ENCODE measurements at regions of chr5 and their contacts with region 1.

Region 1: DNA sequence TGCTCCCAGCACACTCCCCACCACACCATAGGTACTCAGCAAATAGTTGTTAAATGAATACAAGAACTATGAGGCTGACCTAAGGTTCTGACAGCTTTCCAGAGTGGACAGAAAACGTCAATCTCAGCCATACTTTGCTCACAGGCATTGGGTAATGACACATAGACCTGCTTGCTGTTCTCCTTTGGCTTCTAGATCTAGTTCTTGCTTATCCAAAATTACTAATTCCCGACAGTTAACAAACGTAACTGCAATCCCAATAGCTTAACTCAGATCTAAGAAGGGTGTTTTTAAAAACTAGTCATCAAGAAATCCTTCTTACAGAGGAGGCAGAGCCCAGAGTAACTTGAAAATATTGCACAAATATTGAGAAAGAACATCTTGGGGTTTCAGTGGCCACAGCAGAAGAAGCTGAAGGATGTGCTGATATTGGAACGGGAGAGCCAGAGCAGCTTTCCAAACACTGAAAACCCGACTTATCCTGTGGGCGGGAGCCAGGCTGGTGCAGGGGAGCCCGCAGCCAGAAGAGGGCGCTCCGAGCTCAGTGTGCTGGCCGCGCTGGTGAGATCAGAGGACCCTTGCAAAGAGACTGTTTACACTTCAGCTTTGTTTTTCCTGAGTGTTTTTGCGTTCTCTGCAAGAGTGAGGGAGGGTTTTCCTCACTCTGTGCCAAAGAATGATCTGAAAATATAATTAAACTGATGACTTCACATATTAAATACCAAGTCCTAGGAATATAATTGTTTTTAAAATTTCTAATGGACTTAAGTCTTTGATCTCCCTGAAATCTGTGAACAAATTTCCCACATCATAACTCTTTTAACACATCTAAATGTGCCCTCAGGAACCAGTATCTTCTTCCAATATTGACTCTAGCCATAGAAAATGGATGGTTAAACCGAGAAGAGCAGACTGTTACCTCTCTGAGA is 30.3 kb downstream of the FGF1 start:
- DNase-seq: peak; percentile 52
- H3K4me3 ChIP-seq: no peak overlapping the region
- H3K27ac ChIP-seq: no peak overlapping the region
- H3K4me1 ChIP-seq: no peaks in the 10 kb centered on the region
- H3K27me3 ChIP-seq: no peaks in the 10 kb centered on the region
- CTCF ChIP-seq: peak; percentile 96 to 100

Region 2: GRCh38 chr5:142151436-142152383 is 503.9 kb before region 1 on chr5:
- CTCF ChIA-PET with region 1: no interaction called
- dilution Hi-C with region 1: no loop called
- in situ Hi-C with region 1: no loop called
- intact Hi-C with region 1: loop called (anchors 1 kb)
- DNase-seq: peak; percentile 37
- H3K4me3 ChIP-seq: no peak overlapping the region
- H3K27ac ChIP-seq: no peak overlapping the region
- H3K4me1 ChIP-seq: no peaks in the 10 kb centered on the region
- H3K27me3 ChIP-seq: no peaks in the 10 kb centered on the region
- CTCF ChIP-seq: peak; percentile 78 to 88

Region 3: GRCh38 chr5:142386137-142387032 is 269.2 kb before region 1 on chr5:
- CTCF ChIA-PET with region 1: interaction called, 12 read pairs
- dilution Hi-C with region 1: no loop called
- in situ Hi-C with region 1: no loop called
- intact Hi-C with region 1: no loop called
- DNase-seq: peak; percentile 51
- H3K4me3 ChIP-seq: no peak overlapping the region
- H3K27ac ChIP-seq: no peak overlapping the region
- H3K4me1 ChIP-seq: no peaks in the 10 kb centered on the region
- H3K27me3 ChIP-seq: no peaks in the 10 kb centered on the region
- CTCF ChIP-seq: no peak

Region 4: DNA sequence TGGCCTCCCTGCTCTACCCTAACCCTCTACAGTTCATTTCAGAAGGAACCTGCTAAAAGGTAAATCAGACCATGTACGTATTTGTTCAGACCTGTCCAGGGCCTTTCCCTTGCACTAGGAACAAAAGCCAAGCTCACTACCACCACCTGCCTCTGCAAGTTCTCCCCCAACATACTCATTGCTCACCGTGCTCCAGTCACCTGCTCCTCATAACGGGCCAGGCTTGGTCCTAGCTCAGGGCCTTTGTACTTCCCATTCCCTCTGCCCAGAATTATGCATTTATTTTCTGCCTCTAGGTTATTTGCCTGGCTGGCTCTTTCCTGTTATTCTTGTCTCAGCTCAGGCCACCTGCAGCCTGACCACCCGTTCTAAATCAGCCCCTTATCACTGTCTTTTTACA is 35.1 kb after region 1 on chr5:
- CTCF ChIA-PET with region 1: no interaction called
- dilution Hi-C with region 1: no loop called
- in situ Hi-C with region 1: loop called (anchors 5 kb)
- intact Hi-C with region 1: loop called (anchors 1 kb)
- DNase-seq: peak; percentile 68
- H3K4me3 ChIP-seq: no peak overlapping the region
- H3K27ac ChIP-seq: no peak overlapping the region
- H3K4me1 ChIP-seq: peaks cover 31% of the 10 kb centered on the region
- H3K27me3 ChIP-seq: no peaks in the 10 kb centered on the region
- CTCF ChIP-seq: peak in 1 of 2 donors; percentile 44

Region 5: GRCh38 chr5:142699184-142699720 is 43.6 kb after region 1 on chr5:
- CTCF ChIA-PET with region 1: interaction called, 11 read pairs
- dilution Hi-C with region 1: no loop called
- in situ Hi-C with region 1: loop called (anchors 5 kb)
- intact Hi-C with region 1: loop called (anchors 1 kb)
- DNase-seq: peak; percentile 68
- H3K4me3 ChIP-seq: no peak overlapping the region
- H3K27ac ChIP-seq: no peak overlapping the region
- H3K4me1 ChIP-seq: peaks cover 10% of the 10 kb centered on the region
- H3K27me3 ChIP-seq: no peaks in the 10 kb centered on the region
- CTCF ChIP-seq: peak; percentile 98 to 99